IMR-90 (cell line): ENCODE measurements at regions of chr14 and their contacts with region 1.

Region 1: GRCh38 chr14:93332853-93333630 is at the start of gene BTBD7:
- DNase-seq: peak; percentile 92
- ATAC-seq: peak; percentile 96
- H3K4me3 ChIP-seq: peak within 1 kb of the TSS; percentile 55
- H3K27ac ChIP-seq: peak within 1 kb of the TSS; percentile 94
- H3K4me1 ChIP-seq: no peaks in the 10 kb centered on the region
- H3K27me3 ChIP-seq: no peaks in the 10 kb centered on the region
- CTCF ChIP-seq: peak; percentile 40; the same call in 1 of the 2 replicates
- POLR2A ChIP-seq: peak; percentile 80; the same call in 1 of the 2 replicates
- RAD21 ChIP-seq: peak; percentile 39; the same call in 1 of the 2 replicates
- total RNA-seq, gene BTBD7: 30.5 and 30.6 TPM in 2 replicates

Region 2: GRCh38 chr14:92503756-92504491 is 829.1 kb before region 1 on chr14:
- CTCF ChIA-PET with region 1: no interaction called
- POLR2A ChIA-PET with region 1: interaction called, 13 read pairs
- dilution Hi-C with region 1: no loop called
- in situ Hi-C with region 1: no loop called
- intact Hi-C with region 1: no loop called
- DNase-seq: peak; percentile 70
- ATAC-seq: peak; percentile 85
- H3K4me3 ChIP-seq: no peak overlapping the region
- H3K27ac ChIP-seq: peak overlapping the region; percentile 14; the same call in 1 of the 2 replicates
- H3K4me1 ChIP-seq: peaks cover 18% of the 10 kb centered on the region
- H3K27me3 ChIP-seq: no peaks in the 10 kb centered on the region
- CTCF ChIP-seq: no peak
- POLR2A ChIP-seq: no peak
- RAD21 ChIP-seq: no peak

Region 3: DNA sequence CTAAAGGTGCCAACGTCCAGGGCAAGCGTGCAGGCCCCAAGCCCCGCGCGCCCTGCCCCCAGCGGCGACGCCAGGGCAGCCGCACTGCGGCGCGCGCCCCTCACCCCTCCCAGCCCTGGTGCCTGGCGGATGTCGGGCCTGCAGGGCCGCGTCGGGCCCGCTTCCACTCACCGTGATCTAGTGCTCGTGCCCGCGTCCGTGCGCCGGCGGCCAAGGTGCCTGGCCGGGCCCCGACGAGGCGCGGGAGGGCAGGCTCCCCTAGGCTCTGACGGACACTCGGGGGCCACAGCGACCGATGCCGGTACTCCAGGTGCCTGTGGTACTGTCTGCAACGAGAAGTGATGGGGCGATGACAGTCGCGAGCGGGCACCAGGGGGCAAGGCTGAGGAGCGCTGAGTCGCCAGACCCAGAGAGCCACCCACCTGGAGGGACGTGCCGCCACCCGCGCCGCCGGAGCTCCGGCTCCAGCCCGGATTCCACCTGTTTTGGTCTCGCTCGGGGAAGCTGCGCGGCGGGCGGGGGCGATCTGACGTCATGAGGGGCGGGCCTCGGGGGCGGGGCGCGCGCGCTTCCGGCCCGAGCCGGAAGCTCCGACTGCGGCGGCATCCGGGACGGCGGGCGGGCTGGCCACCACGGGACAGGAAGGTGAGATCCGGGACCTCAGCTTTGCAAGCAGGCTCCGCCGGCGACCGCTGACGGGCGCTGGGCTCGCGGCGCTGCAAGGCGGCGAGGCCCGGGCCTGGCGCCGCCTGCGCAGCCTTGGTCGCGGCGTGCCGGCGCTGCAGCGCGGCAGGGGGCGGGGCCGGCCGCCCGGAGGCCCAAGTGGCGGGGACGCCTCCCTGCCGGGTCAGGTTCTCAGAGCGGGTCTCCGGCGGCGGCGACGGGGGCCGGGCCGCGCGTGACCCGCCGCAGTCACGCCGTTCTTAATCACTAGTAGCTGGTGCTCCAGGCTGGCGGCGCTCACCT is 148.4 kb before region 1 on chr14 and contains the starts of genes LYSET and MOAP1:
- CTCF ChIA-PET with region 1: no interaction called
- POLR2A ChIA-PET with region 1: no interaction called
- dilution Hi-C with region 1: no loop called
- in situ Hi-C with region 1: no loop called
- intact Hi-C with region 1: loop called (anchors 1 kb)
- DNase-seq: peak; percentile 79
- ATAC-seq: peak; percentile 90
- H3K4me3 ChIP-seq: peak within 1 kb of the TSS; percentile 99
- H3K27ac ChIP-seq: peak within 1 kb of the TSS; percentile 74
- H3K4me1 ChIP-seq: no peaks in the 10 kb centered on the region
- H3K27me3 ChIP-seq: no peaks in the 10 kb centered on the region
- CTCF ChIP-seq: peak; percentile 14; the same call in 1 of the 2 replicates
- POLR2A ChIP-seq: peak; percentile 87
- RAD21 ChIP-seq: no peak
- total RNA-seq, gene LYSET: 8.3 and 10.2 TPM in 2 replicates
- total RNA-seq, gene MOAP1: 9.9 and 12.8 TPM in 2 replicates

Region 4: GRCh38 chr14:93206793-93207467 is 126.1 kb before region 1 on chr14 and contains the starts of genes GON7 and UBR7:
- CTCF ChIA-PET with region 1: no interaction called
- POLR2A ChIA-PET with region 1: no interaction called
- dilution Hi-C with region 1: no loop called
- in situ Hi-C with region 1: no loop called
- intact Hi-C with region 1: loop called (anchors 1 kb)
- DNase-seq: peak; percentile 96
- ATAC-seq: peak; percentile 95
- H3K4me3 ChIP-seq: peak within 1 kb of the TSS; percentile 88
- H3K27ac ChIP-seq: peak within 1 kb of the TSS; percentile 51
- H3K4me1 ChIP-seq: peaks cover 2% of the 10 kb centered on the region; the same call in 1 of the 2 replicates
- H3K27me3 ChIP-seq: no peaks in the 10 kb centered on the region
- CTCF ChIP-seq: peak; percentile 44
- POLR2A ChIP-seq: peak; percentile 80
- RAD21 ChIP-seq: no peak
- total RNA-seq, gene GON7: 4.3 and 10.3 TPM in 2 replicates
- total RNA-seq, gene UBR7: 29.4 and 55.8 TPM in 2 replicates

Region 5: GRCh38 chr14:93239869-93240677 is 93.0 kb before region 1 on chr14:
- CTCF ChIA-PET with region 1: interaction called, 3 read pairs
- POLR2A ChIA-PET with region 1: no interaction called
- dilution Hi-C with region 1: no loop called
- in situ Hi-C with region 1: no loop called
- intact Hi-C with region 1: loop called (anchors 1 kb)
- DNase-seq: peak; percentile 89
- ATAC-seq: peak; percentile 97
- H3K4me3 ChIP-seq: no peak overlapping the region
- H3K27ac ChIP-seq: peak overlapping the region; percentile 45
- H3K4me1 ChIP-seq: peaks cover 18% of the 10 kb centered on the region
- H3K27me3 ChIP-seq: no peaks in the 10 kb centered on the region
- CTCF ChIP-seq: no peak
- POLR2A ChIP-seq: no peak
- RAD21 ChIP-seq: no peak

Region 6: GRCh38 chr14:94080471-94081289 is 747.6 kb after region 1 on chr14 and contains the start of gene DDX24:
- CTCF ChIA-PET with region 1: no interaction called
- POLR2A ChIA-PET with region 1: no interaction called
- dilution Hi-C with region 1: no loop called
- in situ Hi-C with region 1: no loop called
- intact Hi-C with region 1: loop called (anchors 5 kb)
- DNase-seq: peak; percentile 93
- ATAC-seq: peak; percentile 98
- H3K4me3 ChIP-seq: peak within 1 kb of the TSS; percentile 84
- H3K27ac ChIP-seq: peak within 1 kb of the TSS; percentile 70
- H3K4me1 ChIP-seq: peaks cover 6% of the 10 kb centered on the region
- H3K27me3 ChIP-seq: no peaks in the 10 kb centered on the region
- CTCF ChIP-seq: no peak
- POLR2A ChIP-seq: peak; percentile 95
- RAD21 ChIP-seq: no peak
- total RNA-seq, gene DDX24: 152 and 155 TPM in 2 replicates